ENCODE measurements at regions of chr1 and their contacts with region 1.

Region 1: GRCh38 chr1:55522982-55523381 is 307.8 kb upstream of the USP24 start:
- DNase-seq: no peak
- H3K4me3 ChIP-seq: no peak overlapping the region
- H3K27ac ChIP-seq: no peak overlapping the region
- H3K4me1 ChIP-seq: peaks cover 11% of the 10 kb centered on the region
- H3K27me3 ChIP-seq: no peaks in the 10 kb centered on the region
- CTCF ChIP-seq: no peak
- POLR2A ChIP-seq: no peak

Region 2: DNA sequence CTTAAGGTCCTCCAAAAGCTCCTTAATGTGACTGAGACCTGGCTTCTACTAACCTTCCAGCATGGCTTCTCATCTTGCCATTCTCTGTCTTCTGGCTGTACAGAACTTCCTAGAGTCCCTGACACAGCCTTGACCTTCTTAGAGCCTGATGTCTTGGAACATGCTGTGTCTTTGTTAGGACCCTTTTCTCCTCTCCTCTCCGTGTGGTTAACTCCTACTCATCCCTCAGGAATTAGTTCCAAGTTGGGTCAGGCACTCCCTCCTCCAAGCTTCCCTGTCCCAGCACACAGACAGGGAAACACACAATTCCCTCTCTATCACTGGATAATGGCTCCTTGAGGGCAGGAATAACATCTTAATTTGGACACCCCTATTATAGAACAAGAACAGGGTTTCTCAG is 32.4 kb before region 1 on chr1:
- intact Hi-C with region 1: loop called (anchors 1 kb)
- DNase-seq: no peak
- H3K4me3 ChIP-seq: no peak overlapping the region
- H3K27ac ChIP-seq: no peak overlapping the region
- H3K4me1 ChIP-seq: no peaks in the 10 kb centered on the region
- H3K27me3 ChIP-seq: no peaks in the 10 kb centered on the region
- CTCF ChIP-seq: no peak
- POLR2A ChIP-seq: no peak